Left lung (tissue), 14 donors: ENCODE measurements at regions of chr11 and their contacts with region 1.

Region 1: DNA sequence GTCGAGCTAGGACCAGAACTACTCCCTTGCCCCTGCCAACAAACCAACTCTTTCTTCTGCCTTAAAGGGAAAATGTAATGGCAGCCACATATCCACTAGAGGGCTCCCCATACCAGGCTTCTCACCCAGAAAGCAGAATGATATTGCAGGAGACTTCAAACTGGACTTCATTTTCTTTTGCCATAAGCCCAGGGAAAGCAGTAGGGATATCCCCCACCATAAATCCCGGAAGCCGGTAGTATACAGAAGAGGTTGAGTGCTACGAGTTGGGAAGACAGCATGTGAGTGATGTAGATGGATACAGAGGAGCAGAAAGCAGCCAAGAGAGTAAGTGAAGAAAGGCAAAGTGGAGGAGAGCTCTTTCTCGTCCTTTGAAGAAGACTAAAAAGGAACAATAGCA is 12.1 kb downstream of the PLAAT5 start:
- DNase-seq: peak in 2 of 4 donors; percentile 63 to 76
- ATAC-seq: peak; percentile 99
- H3K4me3 ChIP-seq: no peak overlapping the region
- H3K27ac ChIP-seq: no peak overlapping the region
- H3K4me1 ChIP-seq: peaks cover 0 to 3% of the 10 kb centered on the region in 2 donors
- H3K27me3 ChIP-seq: no peaks in the 10 kb centered on the region
- CTCF ChIP-seq: peak; percentile 79 to 83

Region 2: GRCh38 chr11:63404161-63404935 is 74.5 kb before region 1 on chr11:
- intact Hi-C with region 1: no loop called
- DNase-seq: no peak
- ATAC-seq: no peak
- H3K4me3 ChIP-seq: no peak overlapping the region
- H3K27ac ChIP-seq: no peak overlapping the region
- H3K4me1 ChIP-seq: no peaks in the 10 kb centered on the region
- H3K27me3 ChIP-seq: no peaks in the 10 kb centered on the region
- CTCF ChIP-seq: no peak

Region 3: DNA sequence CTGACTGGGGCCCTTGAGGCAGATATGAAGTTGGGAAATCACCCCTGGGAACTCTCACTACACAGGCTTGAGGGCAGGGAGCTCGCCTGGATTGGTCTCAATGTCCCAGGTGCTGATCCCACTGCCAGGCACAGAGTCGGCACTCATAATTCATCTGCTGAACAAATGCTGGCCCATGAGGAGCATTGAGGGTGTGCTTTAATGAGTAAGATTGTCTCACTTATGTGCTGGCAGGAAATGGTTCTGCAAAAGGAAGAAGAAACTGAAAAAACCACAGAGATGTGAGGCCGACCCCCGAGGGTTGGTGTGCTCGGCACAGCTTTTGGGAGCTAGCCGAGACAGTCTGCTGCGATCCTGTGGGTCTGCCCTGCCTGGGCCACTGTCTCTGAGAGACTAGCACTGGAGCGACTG is 74.8 kb after region 1 on chr11:
- intact Hi-C with region 1: no loop called
- DNase-seq: no peak
- ATAC-seq: peak; percentile 54
- H3K4me3 ChIP-seq: no peak overlapping the region
- H3K27ac ChIP-seq: no peak overlapping the region
- H3K4me1 ChIP-seq: peaks cover 0 to 8% of the 10 kb centered on the region in 2 donors
- H3K27me3 ChIP-seq: no peaks in the 10 kb centered on the region
- CTCF ChIP-seq: no peak

Region 4: GRCh38 chr11:63635762-63636465 is 157.0 kb after region 1 on chr11:
- intact Hi-C with region 1: loop called in 1 of 2 experiments (anchors 5 kb)
- DNase-seq: peak in 2 of 4 donors; percentile 46 to 62
- ATAC-seq: peak; percentile 89
- H3K4me3 ChIP-seq: no peak overlapping the region
- H3K27ac ChIP-seq: no peak overlapping the region
- H3K4me1 ChIP-seq: peaks cover 0 to 21% of the 10 kb centered on the region in 2 donors
- H3K27me3 ChIP-seq: no peaks in the 10 kb centered on the region
- CTCF ChIP-seq: peak; percentile 74 to 79